Astrocyte of the cerebellum (primary cell): ENCODE measurements at regions of chr12 and their contacts with region 1.

Region 1: DNA sequence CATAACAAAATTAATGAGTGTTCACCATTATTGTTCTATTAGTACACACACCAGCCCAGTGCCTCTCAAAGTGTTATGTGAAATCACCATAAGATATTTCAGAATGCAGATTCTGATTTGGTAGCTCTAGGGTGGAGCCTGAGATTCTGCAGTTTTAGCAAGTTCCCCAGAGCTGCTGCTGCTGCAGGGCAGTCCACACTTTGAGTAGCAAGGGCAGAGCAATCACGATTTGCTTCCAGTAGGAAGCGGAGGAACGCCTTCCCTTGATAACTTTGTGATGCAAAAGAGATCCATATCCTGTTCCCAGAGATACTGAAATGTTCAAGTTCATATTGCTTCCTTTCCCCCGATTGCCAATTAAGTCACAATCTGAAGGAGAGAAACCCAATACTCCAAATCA is 57.9 kb downstream of the SLC17A8 start:
- DNase-seq: no peak
- H3K4me3 ChIP-seq: no peak overlapping the region
- CTCF ChIP-seq: no peak

Region 2: GRCh38 chr12:100163416-100164152 is 251.2 kb before region 1 on chr12:
- in situ Hi-C with region 1: no loop called
- DNase-seq: no peak
- H3K4me3 ChIP-seq: peak overlapping the region; percentile 32
- CTCF ChIP-seq: no peak

Region 3: GRCh38 chr12:100458191-100458590 is 43.5 kb after region 1 on chr12:
- in situ Hi-C with region 1: loop called (anchors 5 kb)
- DNase-seq: no peak
- H3K4me3 ChIP-seq: no peak overlapping the region
- CTCF ChIP-seq: no peak